Panc1 (cell line): ENCODE measurements at regions of chr10 and their contacts with region 1.

Region 1: DNA sequence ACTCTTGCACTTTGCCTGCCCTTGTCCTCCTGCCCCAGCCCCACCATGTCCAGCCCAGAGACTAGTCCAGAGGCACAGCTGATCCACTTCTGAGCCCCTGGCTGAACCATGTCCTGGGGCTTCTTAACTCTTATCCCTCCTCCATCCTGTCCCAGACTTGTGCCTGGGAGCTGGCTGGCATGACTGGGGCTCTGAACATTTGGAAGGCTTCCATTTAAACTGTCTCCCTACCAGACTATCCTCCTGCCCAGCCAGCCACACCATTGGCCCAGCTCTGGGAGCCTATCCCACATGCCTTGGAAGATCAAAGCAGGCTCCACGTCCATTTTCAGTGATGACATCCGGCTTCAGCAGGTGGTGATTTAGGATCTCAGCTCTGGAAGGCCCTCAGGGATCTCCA is 57.4 kb downstream of the FAM241B start:
- DNase-seq: no peak
- ATAC-seq: no peak
- H3K4me3 ChIP-seq: no peak overlapping the region
- H3K27ac ChIP-seq: no peak overlapping the region
- H3K4me1 ChIP-seq: no peaks in the 10 kb centered on the region
- H3K27me3 ChIP-seq: peaks cover 7% of the 10 kb centered on the region; the same call in 1 of the 2 replicates
- CTCF ChIP-seq: no peak

Region 2: DNA sequence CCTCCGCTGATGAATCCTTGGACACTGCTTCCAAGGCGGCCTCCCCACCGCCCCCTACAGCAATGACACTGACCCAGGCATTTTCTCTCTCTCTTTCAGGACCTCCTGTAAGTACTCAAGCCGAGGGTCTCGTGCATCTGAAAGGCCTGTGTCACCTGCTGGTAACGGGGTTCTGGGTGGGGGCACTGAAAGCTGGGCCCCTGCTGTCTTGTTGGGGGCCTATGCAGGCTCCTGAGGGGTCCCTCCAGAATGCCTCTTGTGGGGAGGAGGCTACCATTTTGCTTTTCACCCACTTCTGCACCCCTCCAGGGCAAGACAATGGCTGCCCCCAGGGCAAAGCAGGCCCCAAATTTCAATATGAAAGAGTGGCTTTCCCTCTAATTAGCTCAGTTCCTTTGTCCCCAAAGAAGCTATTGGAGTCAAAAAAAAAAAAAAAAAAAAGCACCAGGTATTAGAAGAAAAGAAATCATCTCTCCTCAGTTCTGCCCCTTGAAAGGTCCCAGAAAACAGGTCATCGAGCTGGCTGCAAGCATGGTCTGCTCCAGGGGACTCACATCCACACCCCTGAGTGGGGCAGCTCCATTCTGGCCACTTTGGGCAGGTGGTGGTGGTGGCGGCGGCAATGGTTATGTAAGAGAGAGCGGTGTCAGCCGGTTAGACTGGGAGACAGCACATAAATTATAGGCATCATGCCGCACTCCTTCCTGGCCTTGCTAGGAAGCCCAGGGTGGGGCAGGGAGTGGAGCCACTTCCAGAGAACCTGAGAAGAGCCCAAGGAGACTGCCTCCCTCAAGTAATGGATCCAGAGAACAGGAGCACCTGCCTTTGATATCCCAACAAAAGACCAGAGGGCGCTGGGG is 180.5 kb after region 1 on chr10:
- CTCF ChIA-PET with region 1: no interaction called
- POLR2A ChIA-PET with region 1: interaction called, 10 read pairs
- in situ Hi-C with region 1: no loop called
- intact Hi-C with region 1: no loop called
- DNase-seq: no peak
- ATAC-seq: no peak
- H3K4me3 ChIP-seq: no peak overlapping the region
- H3K27ac ChIP-seq: no peak overlapping the region
- H3K4me1 ChIP-seq: peaks cover 19% of the 10 kb centered on the region; the same call in 1 of the 2 replicates
- H3K27me3 ChIP-seq: no peaks in the 10 kb centered on the region
- CTCF ChIP-seq: no peak

Region 3: GRCh38 chr10:70007116-70007820 is 319.8 kb after region 1 on chr10:
- CTCF ChIA-PET with region 1: no interaction called
- POLR2A ChIA-PET with region 1: no interaction called
- in situ Hi-C with region 1: no loop called
- intact Hi-C with region 1: no loop called
- DNase-seq: no peak
- ATAC-seq: no peak
- H3K4me3 ChIP-seq: no peak overlapping the region
- H3K27ac ChIP-seq: no peak overlapping the region
- H3K4me1 ChIP-seq: no peaks in the 10 kb centered on the region
- H3K27me3 ChIP-seq: peaks cover 51% of the 10 kb centered on the region
- CTCF ChIP-seq: no peak